K562 (cell line): ENCODE measurements at regions of chr6 and their contacts with region 1.

Region 1: GRCh38 chr6:161318456-161318855 is 44.6 kb upstream of the AGPAT4 start:
- DNase-seq: no peak
- ATAC-seq: no peak
- H3K4me3 ChIP-seq: no peak overlapping the region
- H3K27ac ChIP-seq: no peak overlapping the region
- H3K4me1 ChIP-seq: peaks cover 0 to 4% of the 10 kb centered on the region in 2 experiments; a peak in 1 of 5 replicates
- H3K27me3 ChIP-seq: no peaks in the 10 kb centered on the region
- CTCF ChIP-seq: no peak
- EP300 ChIP-seq: no peak
- POLR2A ChIP-seq: no peak
- RAD21 ChIP-seq: no peak

Region 2: DNA sequence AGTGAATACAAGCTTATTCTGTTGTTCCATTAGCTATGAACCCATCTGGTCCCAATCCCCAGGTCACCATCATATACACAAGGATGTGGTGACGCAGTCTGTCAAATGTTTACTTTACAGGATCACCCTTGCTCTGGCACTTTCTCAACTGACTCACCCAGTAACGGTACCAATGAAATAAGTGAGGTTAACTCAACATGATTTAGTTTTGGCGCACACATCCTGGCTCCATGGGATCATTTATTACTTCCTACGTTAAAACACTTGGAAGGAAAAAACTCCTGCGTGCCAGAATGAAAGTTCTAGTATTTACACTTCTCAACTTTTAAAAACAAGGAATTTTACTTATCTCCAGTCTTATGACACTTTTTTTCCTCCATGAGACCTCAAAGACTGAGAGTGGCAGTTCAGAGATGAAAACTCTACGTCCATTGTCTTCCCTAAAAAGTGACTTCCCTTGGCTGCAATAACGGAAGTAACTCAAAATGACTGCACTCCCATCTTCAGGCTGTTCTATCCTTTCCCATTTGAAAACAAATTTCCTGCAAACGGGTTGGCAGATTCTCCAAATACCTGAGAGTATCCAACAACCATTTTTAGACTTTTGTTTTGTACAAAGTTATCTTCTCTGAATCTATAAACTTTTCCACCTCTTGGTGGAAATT is 60.5 kb before region 1 on chr6:
- CTCF ChIA-PET with region 1: no interaction called
- POLR2A ChIA-PET with region 1: no interaction called
- in situ Hi-C with region 1: no loop called
- intact Hi-C with region 1: loop called (anchors 2 kb)
- DNase-seq: no peak
- ATAC-seq: no peak
- H3K4me3 ChIP-seq: no peak overlapping the region
- H3K27ac ChIP-seq: peak overlapping the region; percentile 23; the same call in 1 of the 3 replicates
- H3K4me1 ChIP-seq: peaks cover 35 to 71% of the 10 kb centered on the region in 2 experiments; a peak in 4 of 5 replicates
- H3K27me3 ChIP-seq: no peaks in the 10 kb centered on the region; a peak in 1 of 5 replicates
- CTCF ChIP-seq: no peak; a peak in 1 of 6 replicates
- EP300 ChIP-seq: no peak
- POLR2A ChIP-seq: no peak
- RAD21 ChIP-seq: no peak

Region 3: DNA sequence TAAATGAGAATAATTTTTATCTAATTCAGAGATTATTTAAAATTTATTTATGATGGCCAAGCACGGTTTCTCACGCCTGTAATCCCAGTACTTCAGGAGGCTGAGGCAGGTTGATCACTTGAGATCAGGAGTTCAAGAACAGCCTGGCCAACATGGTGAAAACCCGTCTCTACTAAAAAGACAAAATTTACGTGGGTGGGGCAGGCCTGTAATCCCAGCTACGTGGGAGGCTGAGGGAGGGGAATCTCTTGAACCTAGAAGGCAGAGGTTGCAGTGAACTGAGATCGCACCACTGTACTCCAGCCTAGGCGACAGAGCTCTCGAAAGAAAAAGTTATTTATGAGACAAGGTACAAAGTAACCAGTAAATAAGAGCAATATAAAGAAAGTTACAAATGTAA is 15.0 kb after region 1 on chr6:
- CTCF ChIA-PET with region 1: no interaction called
- POLR2A ChIA-PET with region 1: interaction called, 11 read pairs
- in situ Hi-C with region 1: no loop called
- intact Hi-C with region 1: no loop called
- DNase-seq: no peak
- ATAC-seq: peak; percentile 35; the same call in 2 of the 3 replicates
- H3K4me3 ChIP-seq: no peak overlapping the region
- H3K27ac ChIP-seq: no peak overlapping the region
- H3K4me1 ChIP-seq: no peaks in the 10 kb centered on the region
- H3K27me3 ChIP-seq: no peaks in the 10 kb centered on the region; a peak in 1 of 5 replicates
- CTCF ChIP-seq: no peak
- EP300 ChIP-seq: no peak
- POLR2A ChIP-seq: no peak
- RAD21 ChIP-seq: no peak

Region 4: GRCh38 chr6:161607696-161608297 is 289.3 kb after region 1 on chr6:
- CTCF ChIA-PET with region 1: no interaction called
- POLR2A ChIA-PET with region 1: no interaction called
- in situ Hi-C with region 1: no loop called
- intact Hi-C with region 1: no loop called
- DNase-seq: no peak
- ATAC-seq: no peak
- H3K4me3 ChIP-seq: no peak overlapping the region
- H3K27ac ChIP-seq: no peak overlapping the region
- H3K4me1 ChIP-seq: no peaks in the 10 kb centered on the region
- H3K27me3 ChIP-seq: no peaks in the 10 kb centered on the region
- CTCF ChIP-seq: no peak
- EP300 ChIP-seq: no peak
- POLR2A ChIP-seq: no peak
- RAD21 ChIP-seq: no peak